Activated CD8-positive, alpha-beta T cell treated with anti-CD3 and anti-CD28 coated beads, Interleukin-2, amount 10 ng/mL, durations not matched to agents 7 days and 5 days (primary cell): ENCODE measurements at regions of chr5 and their contacts with region 1.

Region 1: GRCh38 chr5:119340597-119341218 is 15.1 kb upstream of the TNFAIP8 start:
- DNase-seq: peak; percentile 89
- ATAC-seq: peak; percentile 68
- H3K4me3 Mint-ChIP-seq: peak overlapping the region; percentile 78
- H3K27ac Mint-ChIP-seq: peak overlapping the region; percentile 95
- H3K4me1 Mint-ChIP-seq: peaks cover 96% of the 10 kb centered on the region
- H3K27me3 Mint-ChIP-seq: no peaks in the 10 kb centered on the region

Region 2: GRCh38 chr5:119118000-119118399 is 222.7 kb before region 1 on chr5:
- CTCF ChIA-PET with region 1: no interaction called
- POLR2A ChIA-PET with region 1: no interaction called
- DNase-seq: no peak
- ATAC-seq: no peak
- H3K4me3 Mint-ChIP-seq: no peak overlapping the region
- H3K27ac Mint-ChIP-seq: no peak overlapping the region
- H3K4me1 Mint-ChIP-seq: no peaks in the 10 kb centered on the region
- H3K27me3 Mint-ChIP-seq: no peaks in the 10 kb centered on the region

Region 3: DNA sequence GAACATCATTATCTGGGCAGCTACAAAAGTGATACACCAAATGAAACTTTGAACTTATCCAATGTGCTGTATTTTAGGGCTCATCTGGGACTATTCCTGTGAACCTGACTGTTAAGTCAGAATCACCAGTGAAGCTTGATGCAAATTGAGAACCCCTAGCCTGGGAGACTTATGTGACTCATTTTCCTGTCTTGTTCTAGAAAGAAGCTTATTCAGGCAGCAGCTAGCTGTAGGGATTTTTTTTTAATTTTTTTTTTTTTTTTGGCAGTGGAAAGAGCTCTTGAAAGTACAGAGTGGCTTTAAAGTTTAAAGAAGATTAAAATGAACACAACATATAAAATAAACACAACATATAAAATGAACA is 66.0 kb before region 1 on chr5:
- CTCF ChIA-PET with region 1: interaction called, 12 read pairs
- POLR2A ChIA-PET with region 1: interaction called, 8 read pairs
- DNase-seq: no peak
- ATAC-seq: peak; percentile 35
- H3K4me3 Mint-ChIP-seq: peak overlapping the region; percentile 75
- H3K27ac Mint-ChIP-seq: peak overlapping the region; percentile 87
- H3K4me1 Mint-ChIP-seq: peaks cover 88% of the 10 kb centered on the region
- H3K27me3 Mint-ChIP-seq: peaks cover 2% of the 10 kb centered on the region

Region 4: DNA sequence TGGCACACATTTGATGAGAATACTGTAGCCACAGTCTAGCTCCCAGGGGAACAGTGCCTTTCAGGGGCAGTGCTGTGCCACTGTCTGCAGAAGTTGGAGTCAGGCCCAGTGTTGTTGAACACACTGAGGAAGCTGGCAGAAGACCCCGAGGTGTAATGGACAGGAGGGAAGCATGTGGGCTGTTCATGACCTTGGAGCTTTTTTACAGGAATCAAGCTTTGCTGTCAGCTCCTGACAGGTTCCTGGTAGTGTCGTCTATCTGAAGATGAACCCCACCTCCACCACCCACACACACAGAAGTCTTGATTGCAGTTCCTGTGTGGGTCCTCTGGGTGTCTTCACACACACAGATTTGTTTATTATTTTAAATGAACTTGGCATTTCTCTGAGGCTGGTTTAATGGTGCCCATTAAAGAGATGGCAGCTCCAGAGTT is 25.2 kb before region 1 on chr5:
- CTCF ChIA-PET with region 1: interaction called, 274 read pairs
- POLR2A ChIA-PET with region 1: interaction called, 47 read pairs
- DNase-seq: peak; percentile 74
- ATAC-seq: peak; percentile 77
- H3K4me3 Mint-ChIP-seq: peak overlapping the region; percentile 40
- H3K27ac Mint-ChIP-seq: peak overlapping the region; percentile 87
- H3K4me1 Mint-ChIP-seq: peaks cover 94% of the 10 kb centered on the region
- H3K27me3 Mint-ChIP-seq: no peaks in the 10 kb centered on the region

Region 5: DNA sequence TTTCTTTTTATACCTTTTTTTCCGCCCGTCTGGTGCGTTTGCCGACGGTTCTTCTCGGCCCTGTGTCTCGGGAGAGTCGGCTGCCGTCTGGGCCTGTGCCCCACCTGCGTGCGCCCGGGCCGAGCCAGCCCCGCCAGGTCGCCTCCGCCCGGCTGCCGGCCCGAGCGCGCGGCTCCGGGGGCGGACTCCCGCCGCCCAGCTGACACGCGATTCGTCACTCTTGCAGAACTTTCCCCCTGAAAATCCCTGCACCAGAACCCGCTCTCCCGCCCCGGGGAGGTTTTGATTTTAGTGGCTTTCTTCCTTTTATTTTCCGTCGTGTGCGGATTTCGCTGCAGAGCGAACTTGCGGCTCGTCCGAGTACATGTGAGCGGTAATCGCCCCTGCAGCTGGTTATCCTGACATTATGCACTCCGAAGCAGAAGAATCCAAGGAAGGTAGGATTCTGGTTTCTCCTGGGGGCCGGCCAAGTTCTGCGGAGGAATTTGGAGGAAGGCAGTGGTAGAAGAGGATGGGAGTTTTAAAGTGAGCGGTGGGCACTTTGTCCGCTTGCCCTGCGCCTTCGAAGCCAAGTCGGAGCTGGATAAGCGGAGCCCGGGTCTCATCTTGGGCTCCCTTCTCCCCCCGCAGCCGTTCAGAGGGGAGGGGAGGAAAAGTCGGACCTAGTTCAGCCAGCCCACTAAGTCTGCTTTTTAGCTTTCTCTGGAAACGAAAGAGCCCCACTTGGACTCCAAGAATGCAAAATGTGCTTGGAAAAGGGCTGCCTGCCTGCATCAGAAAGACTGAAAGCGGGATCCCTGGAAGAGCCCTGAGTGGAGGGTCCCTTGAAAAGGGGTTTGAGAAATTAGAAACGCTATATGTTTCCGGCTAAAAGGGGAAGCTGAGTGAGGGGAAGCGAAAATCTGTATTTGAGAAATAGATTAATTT is 15.2 kb after region 1 on chr5 and contains the start of gene TNFAIP8:
- CTCF ChIA-PET with region 1: interaction called, 28 read pairs
- POLR2A ChIA-PET with region 1: interaction called, 280 read pairs
- DNase-seq: peak; percentile 53
- ATAC-seq: peak; percentile 69
- H3K4me3 Mint-ChIP-seq: peak within 1 kb of the TSS; percentile 83
- H3K27ac Mint-ChIP-seq: peak within 1 kb of the TSS; percentile 88
- H3K4me1 Mint-ChIP-seq: peaks cover 88% of the 10 kb centered on the region
- H3K27me3 Mint-ChIP-seq: no peaks in the 10 kb centered on the region
- total RNA-seq, gene TNFAIP8: 123 to 127 TPM

Region 6: DNA sequence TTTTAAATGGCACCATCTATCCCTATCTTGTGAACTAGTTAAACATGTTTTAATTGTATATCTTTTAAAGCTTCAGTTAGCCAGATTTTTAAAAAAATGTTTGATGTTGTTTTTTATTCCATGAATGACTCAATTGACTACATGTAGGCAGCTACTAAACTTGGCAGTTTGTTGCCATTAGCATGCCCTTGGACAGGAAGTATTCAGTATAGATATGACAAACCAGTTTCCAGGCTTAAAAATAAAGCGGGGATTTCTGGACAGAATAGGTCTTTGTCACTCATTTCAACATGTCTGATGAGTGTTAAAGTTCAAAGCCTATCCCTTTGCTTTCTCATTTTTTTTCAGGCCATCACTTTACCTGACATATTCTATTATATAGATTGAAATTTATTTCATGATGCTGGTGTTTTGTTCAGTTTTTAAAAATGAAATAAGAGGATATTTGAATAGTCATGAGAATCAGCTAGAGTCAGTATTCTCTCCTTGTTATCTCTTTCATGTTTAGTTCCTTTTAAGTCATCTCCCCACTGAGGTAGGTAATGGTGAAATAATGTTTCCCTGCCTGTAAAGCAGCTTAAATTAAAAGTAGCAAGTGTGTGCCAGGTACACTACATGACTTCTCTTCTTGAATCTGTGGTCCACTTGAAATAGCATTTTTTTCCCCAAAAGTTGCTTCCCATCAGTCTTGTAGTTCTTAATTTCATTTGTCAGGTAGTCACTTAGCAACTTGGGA is 27.0 kb after region 1 on chr5:
- CTCF ChIA-PET with region 1: interaction called, 17 read pairs
- POLR2A ChIA-PET with region 1: interaction called, 280 read pairs
- DNase-seq: no peak
- ATAC-seq: peak; percentile 61
- H3K4me3 Mint-ChIP-seq: peak overlapping the region; percentile 40
- H3K27ac Mint-ChIP-seq: peak overlapping the region; percentile 88
- H3K4me1 Mint-ChIP-seq: peaks cover 83% of the 10 kb centered on the region
- H3K27me3 Mint-ChIP-seq: no peaks in the 10 kb centered on the region

Region 7: DNA sequence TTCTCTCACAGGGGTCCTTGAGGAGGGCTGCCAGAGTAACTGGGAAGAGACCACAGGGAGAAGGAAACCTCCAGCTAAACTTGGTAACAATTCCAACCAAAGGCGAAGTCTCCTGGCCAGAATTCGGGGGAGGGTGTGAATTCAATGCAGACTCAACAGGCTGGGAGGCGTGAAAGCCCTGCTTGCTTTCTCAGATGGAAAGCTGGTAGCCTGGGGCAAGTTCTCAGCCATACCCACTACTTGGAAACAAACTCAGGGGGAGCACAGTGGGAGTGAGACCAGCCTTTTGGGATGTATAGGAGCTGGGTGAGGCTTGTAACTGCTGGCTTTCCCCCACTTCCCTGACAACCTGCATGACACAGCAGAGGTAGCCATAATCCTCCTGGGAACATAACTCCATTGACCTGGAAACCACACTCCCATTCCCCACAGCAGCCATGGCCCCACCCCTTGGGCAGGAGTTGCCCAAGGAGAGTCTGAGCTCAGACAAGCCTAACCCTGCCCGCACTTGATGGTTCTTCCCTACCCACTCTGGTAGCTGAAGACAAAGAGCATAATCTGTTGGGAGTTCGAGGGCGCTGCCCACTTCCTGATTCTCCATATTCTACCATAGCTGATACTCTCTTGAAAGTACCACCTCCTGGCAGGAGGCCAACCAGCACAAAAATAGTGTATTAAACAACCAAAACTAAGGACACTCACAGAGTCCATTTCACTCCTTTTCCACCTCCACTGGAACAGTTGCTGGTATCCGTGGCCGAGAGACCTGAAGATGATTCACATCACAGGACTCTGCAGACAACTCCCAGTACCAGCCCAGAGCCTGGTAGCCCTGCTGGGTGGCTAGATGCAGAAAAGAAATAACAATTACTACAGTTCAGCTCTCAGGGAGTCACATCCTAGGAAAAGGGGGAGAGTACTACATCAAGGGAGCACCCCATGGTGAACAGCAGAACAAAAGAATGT is 412.5 kb after region 1 on chr5:
- CTCF ChIA-PET with region 1: no interaction called
- POLR2A ChIA-PET with region 1: no interaction called
- DNase-seq: no peak
- ATAC-seq: no peak
- H3K4me3 Mint-ChIP-seq: no peak overlapping the region
- H3K27ac Mint-ChIP-seq: no peak overlapping the region
- H3K4me1 Mint-ChIP-seq: no peaks in the 10 kb centered on the region
- H3K27me3 Mint-ChIP-seq: peaks cover 2% of the 10 kb centered on the region